Activated T-helper 2 cell treated with anti-CD3 and anti-CD28 coated beads, Interferon-gamma antibody, Interleukin-2, Interleukin-4, amounts not matched to agents 10 μg/mL and 5 μg/mL and 100 μg/mL, durations not matched to agents 14 hours and 24 hours and 36 hours (primary cell): ENCODE measurements at regions of chr1 and their contacts with region 1.

Region 1: GRCh38 chr1:203326830-203327683 is 21.7 kb downstream of the BTG2 start:
- DNase-seq: peak; percentile 93
- H3K4me3 Mint-ChIP-seq: peak overlapping the region; percentile 78
- H3K27ac Mint-ChIP-seq: peak overlapping the region; percentile 96
- H3K4me1 Mint-ChIP-seq: peaks cover 62% of the 10 kb centered on the region
- H3K27me3 Mint-ChIP-seq: no peaks in the 10 kb centered on the region

Region 2: DNA sequence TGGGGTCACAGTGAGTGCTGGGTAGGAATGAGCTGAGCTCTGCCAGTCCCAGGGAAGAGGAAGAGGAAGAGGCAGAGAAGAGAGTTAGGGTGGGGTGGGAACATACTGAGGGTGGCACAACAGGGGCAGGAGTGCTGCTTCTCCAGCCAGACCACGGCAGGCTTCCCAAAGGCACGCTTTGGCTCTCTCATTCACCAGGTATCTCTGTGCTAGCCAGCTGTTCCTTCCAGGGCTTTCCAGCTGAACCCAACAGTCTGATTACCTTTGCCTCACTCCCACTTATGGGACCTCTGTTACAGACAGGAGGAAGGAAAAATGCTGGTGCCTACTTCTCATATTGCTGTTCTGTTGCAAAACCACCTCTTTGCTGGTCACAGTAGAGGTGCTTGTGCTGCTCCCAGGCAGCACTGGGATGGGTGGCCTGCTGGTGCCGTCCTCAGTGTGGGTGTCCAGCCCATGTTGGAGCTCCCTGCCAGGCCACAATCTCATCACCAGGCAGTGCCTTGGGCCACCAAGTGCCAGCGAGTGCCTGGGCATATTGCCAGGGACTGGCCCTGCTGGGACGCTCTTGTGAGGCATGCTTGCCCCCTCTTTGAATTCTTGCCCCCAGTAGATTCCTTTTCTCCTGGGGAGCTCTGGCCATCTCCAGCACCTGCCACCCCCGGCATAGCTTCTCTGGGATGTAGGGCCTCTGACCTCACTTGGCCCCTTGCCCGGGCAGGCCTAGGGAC is 197.4 kb before region 1 on chr1:
- intact Hi-C with region 1: no loop called
- DNase-seq: no peak
- H3K4me3 Mint-ChIP-seq: no peak overlapping the region
- H3K27ac Mint-ChIP-seq: no peak overlapping the region
- H3K4me1 Mint-ChIP-seq: peaks cover 4% of the 10 kb centered on the region
- H3K27me3 Mint-ChIP-seq: peaks cover 32% of the 10 kb centered on the region

Region 3: DNA sequence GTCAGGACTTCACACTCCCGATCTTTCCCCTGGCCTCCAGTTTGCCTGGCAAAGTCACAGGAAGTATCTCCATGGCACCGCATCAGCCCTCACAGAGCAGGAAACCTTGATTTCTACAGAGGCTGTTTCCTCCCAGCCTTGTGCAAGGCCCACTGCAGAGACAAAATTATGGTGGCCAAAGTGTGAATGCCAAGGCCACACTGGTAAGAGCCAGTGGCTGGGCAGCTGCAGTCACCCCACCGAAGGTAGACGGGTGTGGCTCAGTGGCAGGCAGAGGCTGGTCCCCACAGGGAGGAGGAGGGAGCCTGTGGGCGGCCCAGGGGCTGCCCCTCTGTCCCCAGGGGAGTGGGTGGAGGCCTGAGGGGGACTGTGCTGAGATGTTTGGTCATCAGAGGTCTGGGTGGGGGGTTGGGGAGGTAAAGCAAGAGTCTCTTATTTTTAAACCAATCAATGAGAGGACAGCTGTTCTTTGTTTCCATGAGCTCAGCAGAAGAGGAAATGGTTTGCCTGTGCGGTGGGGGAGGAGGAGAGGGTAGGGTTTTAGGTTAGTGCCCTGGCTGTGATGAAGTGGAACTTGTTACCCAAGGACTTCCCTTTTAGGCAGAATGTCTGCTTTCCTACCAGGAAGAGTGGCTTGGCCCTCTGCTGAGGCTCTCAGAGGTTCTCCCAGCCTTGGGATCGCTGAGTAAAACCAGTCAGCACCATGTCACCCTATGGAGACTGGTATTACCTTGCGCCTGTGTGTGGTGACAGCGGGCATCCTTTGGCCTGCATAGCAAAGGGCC is 39.8 kb before region 1 on chr1:
- intact Hi-C with region 1: loop called (anchors 1 kb)
- DNase-seq: peak; percentile 82
- H3K4me3 Mint-ChIP-seq: peak overlapping the region; percentile 76
- H3K27ac Mint-ChIP-seq: peak overlapping the region; percentile 99
- H3K4me1 Mint-ChIP-seq: peaks cover 66% of the 10 kb centered on the region
- H3K27me3 Mint-ChIP-seq: no peaks in the 10 kb centered on the region

Region 4: GRCh38 chr1:203340112-203340804 is 13.2 kb after region 1 on chr1:
- intact Hi-C with region 1: loop called (anchors 1 kb)
- DNase-seq: peak; percentile 43
- H3K4me3 Mint-ChIP-seq: no peak overlapping the region
- H3K27ac Mint-ChIP-seq: no peak overlapping the region
- H3K4me1 Mint-ChIP-seq: peaks cover 7% of the 10 kb centered on the region
- H3K27me3 Mint-ChIP-seq: peaks cover 27% of the 10 kb centered on the region

Region 5: GRCh38 chr1:203368624-203369451 is 41.8 kb after region 1 on chr1:
- intact Hi-C with region 1: no loop called
- DNase-seq: no peak
- H3K4me3 Mint-ChIP-seq: no peak overlapping the region
- H3K27ac Mint-ChIP-seq: no peak overlapping the region
- H3K4me1 Mint-ChIP-seq: no peaks in the 10 kb centered on the region
- H3K27me3 Mint-ChIP-seq: peaks cover 23% of the 10 kb centered on the region

Region 6: DNA sequence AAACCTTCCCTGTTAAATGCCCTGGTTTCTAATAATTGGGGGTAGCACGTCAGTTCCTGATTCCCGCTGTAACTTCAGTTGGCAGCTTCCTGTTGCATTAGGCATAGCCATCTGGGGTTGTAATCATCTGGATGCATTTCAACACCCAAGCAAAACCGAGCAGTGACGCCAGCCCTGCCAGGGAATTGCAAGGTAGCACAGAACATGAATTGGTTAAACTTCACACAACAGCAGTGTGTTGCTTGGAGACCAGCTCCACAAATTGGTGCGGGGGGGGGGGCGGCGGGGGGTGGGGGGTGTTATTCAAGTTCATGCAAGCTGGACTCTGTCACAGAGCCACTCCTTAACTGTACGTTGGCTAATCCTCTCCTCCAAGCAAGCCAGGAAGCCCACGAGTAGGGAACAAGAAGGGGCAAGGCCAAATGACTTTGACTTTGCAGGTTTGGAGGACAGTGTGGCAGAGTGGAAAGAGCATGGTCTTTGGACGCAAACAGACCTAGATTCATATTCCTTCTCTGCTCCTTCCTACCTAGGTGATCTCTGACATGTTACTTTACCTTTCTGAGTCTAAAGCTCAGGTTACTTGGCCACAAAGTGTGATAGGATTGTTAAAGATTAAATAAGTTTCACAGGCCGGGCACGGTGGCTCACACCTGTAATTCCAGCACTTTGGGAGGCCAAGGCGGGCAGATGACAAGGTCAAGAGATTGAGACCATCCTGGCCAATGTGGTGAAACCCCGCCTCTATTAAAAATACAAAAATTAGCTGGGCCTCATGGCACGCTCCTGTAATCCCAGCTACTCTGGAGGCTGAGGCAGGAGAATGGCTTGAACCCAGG is 442.7 kb after region 1 on chr1:
- intact Hi-C with region 1: loop called (anchors 10 kb)
- DNase-seq: no peak
- H3K4me3 Mint-ChIP-seq: no peak overlapping the region
- H3K27ac Mint-ChIP-seq: peak overlapping the region; percentile 34
- H3K4me1 Mint-ChIP-seq: peaks cover 16% of the 10 kb centered on the region
- H3K27me3 Mint-ChIP-seq: no peaks in the 10 kb centered on the region